AG04449 (cell line): ENCODE measurements at regions of chr3 and their contacts with region 1.

Region 1: GRCh38 chr3:193665370-193665989 is 72.5 kb downstream of the OPA1 start:
- DNase-seq: no peak
- H3K4me3 ChIP-seq: no peak overlapping the region
- CTCF ChIP-seq: no peak

Region 2: GRCh38 chr3:193407112-193407511 is 258.4 kb before region 1 on chr3:
- CTCF ChIA-PET with region 1: no interaction called
- POLR2A ChIA-PET with region 1: no interaction called
- DNase-seq: no peak
- H3K4me3 ChIP-seq: no peak overlapping the region
- CTCF ChIP-seq: no peak

Region 3: GRCh38 chr3:193640165-193640715 is 25.2 kb before region 1 on chr3:
- CTCF ChIA-PET with region 1: interaction called, 26 read pairs
- POLR2A ChIA-PET with region 1: no interaction called
- DNase-seq: no peak
- H3K4me3 ChIP-seq: no peak overlapping the region
- CTCF ChIP-seq: no peak

Region 4: DNA sequence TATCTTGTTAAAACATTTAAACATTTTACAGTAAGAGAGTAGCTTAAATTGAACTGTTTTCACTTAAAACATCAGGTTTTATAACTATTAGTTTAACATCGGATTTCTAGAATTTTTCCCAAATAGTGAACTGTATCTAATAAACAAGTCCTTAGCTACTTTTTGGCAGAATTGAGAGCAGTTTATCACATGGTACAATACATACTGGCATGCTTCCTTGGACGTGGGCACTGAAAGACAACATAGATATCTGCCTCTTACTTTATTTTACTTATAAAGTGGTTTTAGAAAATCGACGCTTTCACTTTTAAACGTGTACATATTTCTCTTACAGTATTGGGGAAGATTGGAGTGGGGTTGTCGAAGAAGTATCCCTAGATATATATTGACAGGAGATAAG is 19.7 kb before region 1 on chr3:
- CTCF ChIA-PET with region 1: interaction called, 26 read pairs
- POLR2A ChIA-PET with region 1: no interaction called
- DNase-seq: no peak
- H3K4me3 ChIP-seq: no peak overlapping the region
- CTCF ChIP-seq: no peak

Region 5: GRCh38 chr3:193794002-193794881 is 128.8 kb after region 1 on chr3:
- CTCF ChIA-PET with region 1: no interaction called
- POLR2A ChIA-PET with region 1: no interaction called
- DNase-seq: no peak
- H3K4me3 ChIP-seq: no peak overlapping the region
- CTCF ChIP-seq: no peak

Region 6: GRCh38 chr3:193910886-193911738 is 245.6 kb after region 1 on chr3:
- CTCF ChIA-PET with region 1: no interaction called
- POLR2A ChIA-PET with region 1: no interaction called
- DNase-seq: no peak
- H3K4me3 ChIP-seq: no peak overlapping the region
- CTCF ChIP-seq: no peak